Testis (tissue), 5 donors: ENCODE measurements at regions of chr14 and their contacts with region 1.

Region 1: GRCh38 chr14:35114034-35114433 is 7.8 kb downstream of the PPP2R3C start:
- DNase-seq: no peak
- H3K4me3 ChIP-seq: no peak overlapping the region
- H3K27ac ChIP-seq: no peak overlapping the region
- H3K4me1 ChIP-seq: no peaks in the 10 kb centered on the region
- H3K27me3 ChIP-seq: no peaks in the 10 kb centered on the region
- CTCF ChIP-seq: no peak
- POLR2A ChIP-seq: no peak

Region 2: DNA sequence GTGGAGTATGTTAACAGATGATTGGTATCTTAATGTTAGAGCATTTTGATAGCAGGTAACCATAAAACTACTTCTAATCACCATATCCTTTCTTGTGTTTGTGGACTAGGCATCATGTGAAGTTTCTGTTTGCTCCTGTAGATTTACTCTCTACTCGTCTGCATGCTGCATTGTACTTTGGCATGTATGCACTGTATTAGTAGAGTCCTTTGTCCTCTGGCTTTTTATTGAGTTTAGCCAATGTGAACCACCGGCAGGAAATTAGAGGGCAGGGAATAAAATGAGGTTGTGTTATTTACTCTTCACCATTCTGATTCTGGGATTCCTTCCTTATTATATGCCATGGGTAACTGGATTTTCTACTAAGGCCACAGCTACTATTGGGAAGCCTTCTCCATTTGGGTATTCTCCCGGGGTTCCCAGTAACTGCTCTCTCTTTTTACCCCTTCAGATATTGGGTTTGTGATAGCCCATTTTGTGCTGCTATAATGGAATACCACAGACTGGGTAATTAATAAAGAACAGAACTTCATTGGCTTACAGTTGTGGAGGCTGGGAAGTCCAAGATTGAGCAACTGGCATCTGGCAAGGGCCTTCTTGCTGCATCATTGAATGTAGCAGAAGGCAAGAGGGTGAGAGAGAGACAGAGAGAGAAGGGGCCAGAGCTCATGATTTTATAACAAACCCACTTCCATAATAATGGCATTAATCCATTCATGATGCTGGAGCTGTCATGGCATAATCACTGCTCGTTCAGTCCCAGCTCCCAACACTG is 45.6 kb before region 1 on chr14:
- intact Hi-C with region 1: loop called (anchors 10 kb)
- DNase-seq: no peak
- H3K4me3 ChIP-seq: no peak overlapping the region
- H3K27ac ChIP-seq: no peak overlapping the region
- H3K4me1 ChIP-seq: no peaks in the 10 kb centered on the region
- H3K27me3 ChIP-seq: no peaks in the 10 kb centered on the region
- CTCF ChIP-seq: no peak
- POLR2A ChIP-seq: no peak

Region 3: DNA sequence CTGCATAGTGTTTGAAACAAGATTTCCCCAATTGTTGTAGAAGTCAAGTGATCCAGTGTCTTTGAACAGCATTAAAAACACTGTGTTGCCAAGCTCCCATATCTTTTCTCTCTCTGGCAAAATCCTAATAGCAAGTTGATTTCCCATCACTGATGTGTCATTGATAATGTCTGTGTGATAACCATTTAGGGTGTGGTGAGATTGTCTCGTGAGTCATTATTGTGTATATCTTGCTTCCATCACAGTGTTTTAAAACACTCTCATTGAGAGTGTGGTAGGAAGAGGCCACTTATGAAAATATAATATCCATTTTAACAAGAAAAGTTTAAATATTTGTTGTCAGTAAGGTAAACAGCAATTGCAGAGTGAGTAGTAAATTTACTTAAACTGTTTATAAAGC is 83.0 kb after region 1 on chr14:
- intact Hi-C with region 1: no loop called
- DNase-seq: no peak
- H3K4me3 ChIP-seq: no peak overlapping the region
- H3K27ac ChIP-seq: no peak overlapping the region
- H3K4me1 ChIP-seq: no peaks in the 10 kb centered on the region
- H3K27me3 ChIP-seq: no peaks in the 10 kb centered on the region
- CTCF ChIP-seq: no peak
- POLR2A ChIP-seq: no peak